ENCODE measurements at regions of chr2 and their contacts with region 1.

Region 1: DNA sequence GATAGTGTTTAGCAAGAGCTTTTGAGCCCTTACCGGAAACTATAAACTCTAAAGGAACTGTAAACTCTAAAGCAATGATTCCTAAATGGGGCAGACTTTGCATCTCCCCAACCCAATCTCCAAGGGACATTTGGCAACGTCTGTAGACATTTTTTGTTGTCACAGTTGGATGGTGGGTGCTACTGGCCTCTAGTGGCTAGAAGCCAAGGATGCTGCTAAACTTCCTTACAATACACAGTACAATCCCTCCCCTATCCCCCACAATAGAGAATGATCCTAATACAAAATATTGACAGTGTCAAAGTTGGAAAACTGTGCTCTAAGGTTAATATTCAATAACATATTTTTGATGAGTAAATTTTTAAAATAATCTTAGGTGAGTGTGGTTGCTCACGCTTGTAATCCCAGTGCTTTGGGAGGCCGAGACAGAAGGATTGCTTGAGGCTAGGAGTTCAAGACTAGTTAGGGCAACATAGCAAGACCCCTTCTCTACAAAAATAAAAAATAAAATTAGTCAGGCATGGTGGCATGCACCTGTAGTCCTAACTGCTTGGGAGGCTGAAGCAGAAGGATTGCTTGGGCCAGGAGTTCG is 66.7 kb downstream of the PTPN4 start:
- DNase-seq: peak in 13 of 14 experiments; percentile 10 to 71 (median 33)
- ATAC-seq: peak; percentile 82
- H3K4me3 ChIP-seq: no peak overlapping the region
- H3K4me3 Mint-ChIP-seq: no peak overlapping the region
- H3K27ac ChIP-seq: no peak overlapping the region
- H3K27ac Mint-ChIP-seq: no peak overlapping the region
- H3K4me1 ChIP-seq: no peaks in the 10 kb centered on the region
- H3K4me1 Mint-ChIP-seq: peaks cover 65% of the 10 kb centered on the region
- H3K27me3 ChIP-seq: no peaks in the 10 kb centered on the region
- H3K27me3 Mint-ChIP-seq: no peaks in the 10 kb centered on the region
- CTCF ChIP-seq: peak; percentile 74

Region 2: GRCh38 chr2:119517433-119517832 is 309.0 kb before region 1 on chr2:
- CTCF ChIA-PET with region 1: no interaction called
- POLR2A ChIA-PET with region 1: no interaction called
- intact Hi-C with region 1: loop called in 1 of 2 experiments (anchors 10 kb)
- DNase-seq: peak in 10 of 14 experiments; percentile 1 to 46 (median 14)
- ATAC-seq: no peak
- H3K4me3 ChIP-seq: no peak overlapping the region
- H3K4me3 Mint-ChIP-seq: no peak overlapping the region
- H3K27ac ChIP-seq: no peak overlapping the region
- H3K27ac Mint-ChIP-seq: no peak overlapping the region
- H3K4me1 ChIP-seq: no peaks in the 10 kb centered on the region
- H3K4me1 Mint-ChIP-seq: no peaks in the 10 kb centered on the region
- H3K27me3 ChIP-seq: peaks cover 0 to 6% of the 10 kb centered on the region in 2 experiments
- H3K27me3 Mint-ChIP-seq: peaks cover 68% of the 10 kb centered on the region
- CTCF ChIP-seq: peak; percentile 34

Region 3: DNA sequence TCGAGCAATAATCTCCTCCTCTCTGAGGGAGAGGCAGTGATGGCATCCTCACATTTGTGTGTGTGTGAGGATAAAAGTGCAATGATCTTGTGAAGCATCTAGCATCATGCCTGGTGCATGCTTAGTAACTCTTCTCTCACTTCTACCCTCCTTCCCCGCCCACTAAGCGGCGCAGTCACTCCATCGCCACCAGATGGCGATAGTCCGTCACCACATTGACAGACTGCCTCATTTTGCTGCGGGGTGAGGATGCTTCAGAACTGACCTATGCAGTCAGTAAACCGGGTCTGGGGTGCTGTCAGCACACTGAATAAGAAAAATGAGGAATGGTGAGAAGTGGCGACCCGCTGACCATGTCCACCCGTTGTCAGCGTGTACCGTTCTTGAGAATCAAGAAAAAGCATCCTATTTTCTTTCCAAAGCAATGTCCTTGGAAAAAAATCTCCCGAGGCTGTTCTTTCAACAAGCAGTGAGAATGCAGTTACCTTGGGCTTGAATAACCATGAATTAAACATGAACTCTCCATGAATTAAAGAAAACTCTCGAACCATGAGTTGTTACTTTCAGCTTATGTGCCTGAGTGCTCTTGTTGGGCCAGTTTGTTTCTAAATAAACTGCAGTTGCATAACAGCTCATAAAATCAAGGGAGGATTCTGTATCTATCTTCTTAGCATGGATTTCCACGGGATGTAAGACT is 184.8 kb before region 1 on chr2:
- CTCF ChIA-PET with region 1: no interaction called
- POLR2A ChIA-PET with region 1: no interaction called
- intact Hi-C with region 1: loop called (anchors 1 to 5 kb)
- DNase-seq: peak; percentile 46 to 84 (median 64)
- ATAC-seq: peak; percentile 94
- H3K4me3 ChIP-seq: no peak overlapping the region
- H3K4me3 Mint-ChIP-seq: no peak overlapping the region
- H3K27ac ChIP-seq: no peak overlapping the region
- H3K27ac Mint-ChIP-seq: no peak overlapping the region
- H3K4me1 ChIP-seq: peaks cover 4% of the 10 kb centered on the region
- H3K4me1 Mint-ChIP-seq: peaks cover 5% of the 10 kb centered on the region
- H3K27me3 ChIP-seq: no peaks in the 10 kb centered on the region
- H3K27me3 Mint-ChIP-seq: peaks cover 5% of the 10 kb centered on the region
- CTCF ChIP-seq: peak; percentile 96

Region 4: DNA sequence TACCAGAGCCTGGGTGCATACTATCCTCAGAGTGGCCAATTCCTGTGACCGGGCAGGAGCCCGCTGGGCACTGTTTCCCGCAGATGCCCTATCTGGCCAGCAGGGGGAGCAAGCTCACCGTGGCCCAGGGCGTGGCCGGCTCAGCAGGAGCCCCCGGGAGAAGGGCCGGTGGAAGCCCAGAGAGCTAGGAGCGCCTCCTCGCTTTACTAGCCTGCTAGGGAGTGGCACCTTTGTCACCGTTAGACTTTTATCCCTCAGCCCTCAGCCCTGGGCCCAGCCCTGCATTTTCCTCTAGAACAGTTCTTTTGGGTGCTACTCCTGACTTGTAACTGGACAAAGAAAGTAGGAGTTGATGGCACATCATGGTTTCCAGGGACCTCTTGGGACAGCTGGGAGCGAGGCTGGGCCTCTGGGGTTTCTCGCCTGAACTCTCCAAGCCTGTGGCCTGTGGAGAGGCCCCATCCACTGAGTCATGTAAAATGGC is 123.5 kb before region 1 on chr2:
- CTCF ChIA-PET with region 1: interaction called, 4 read pairs
- POLR2A ChIA-PET with region 1: no interaction called
- intact Hi-C with region 1: loop called (anchors 1 kb)
- DNase-seq: peak; percentile 28 to 82 (median 54)
- ATAC-seq: peak; percentile 71
- H3K4me3 ChIP-seq: no peak overlapping the region
- H3K4me3 Mint-ChIP-seq: no peak overlapping the region
- H3K27ac ChIP-seq: no peak overlapping the region
- H3K27ac Mint-ChIP-seq: no peak overlapping the region
- H3K4me1 ChIP-seq: peaks cover 26% of the 10 kb centered on the region
- H3K4me1 Mint-ChIP-seq: peaks cover 6% of the 10 kb centered on the region
- H3K27me3 ChIP-seq: no peaks in the 10 kb centered on the region
- H3K27me3 Mint-ChIP-seq: no peaks in the 10 kb centered on the region
- CTCF ChIP-seq: peak; percentile 98

Region 5: GRCh38 chr2:119753041-119753929 is 73.2 kb before region 1 on chr2:
- CTCF ChIA-PET with region 1: interaction called, 22 read pairs
- POLR2A ChIA-PET with region 1: interaction called, 4 read pairs
- intact Hi-C with region 1: loop called (anchors 1 kb)
- DNase-seq: peak in 8 of 14 experiments; percentile 9 to 75 (median 40)
- ATAC-seq: peak; percentile 86
- H3K4me3 ChIP-seq: no peak overlapping the region
- H3K4me3 Mint-ChIP-seq: no peak overlapping the region
- H3K27ac ChIP-seq: no peak overlapping the region
- H3K27ac Mint-ChIP-seq: no peak overlapping the region
- H3K4me1 ChIP-seq: no peaks in the 10 kb centered on the region
- H3K4me1 Mint-ChIP-seq: peaks cover 4% of the 10 kb centered on the region
- H3K27me3 ChIP-seq: no peaks in the 10 kb centered on the region
- H3K27me3 Mint-ChIP-seq: no peaks in the 10 kb centered on the region
- CTCF ChIP-seq: peak; percentile 91